ENCODE measurements at regions of chr10 and their contacts with region 1.

Region 1: GRCh38 chr10:124092860-124093773 is at the start of gene CHST15:
- DNase-seq: peak; percentile 69
- H3K4me3 ChIP-seq: peak within 1 kb of the TSS; percentile 81
- H3K27ac ChIP-seq: peak within 1 kb of the TSS; percentile 68
- H3K4me1 ChIP-seq: peaks cover 42% of the 10 kb centered on the region
- CTCF ChIP-seq: peak; percentile 63
- total RNA-seq, gene CHST15: 19.9 and 26.4 TPM in 2 replicates

Region 2: GRCh38 chr10:124035928-124036558 is 57.1 kb before region 1 on chr10:
- CTCF ChIA-PET with region 1: no interaction called
- POLR2A ChIA-PET with region 1: no interaction called
- intact Hi-C with region 1: loop called (anchors 2 kb)
- DNase-seq: peak; percentile 96
- H3K4me3 ChIP-seq: peak overlapping the region; percentile 57
- H3K27ac ChIP-seq: peak overlapping the region; percentile 90
- H3K4me1 ChIP-seq: peaks cover 35% of the 10 kb centered on the region
- CTCF ChIP-seq: no peak

Region 3: GRCh38 chr10:124049484-124049883 is 43.6 kb before region 1 on chr10:
- CTCF ChIA-PET with region 1: no interaction called
- POLR2A ChIA-PET with region 1: no interaction called
- intact Hi-C with region 1: no loop called
- DNase-seq: no peak
- H3K4me3 ChIP-seq: no peak overlapping the region
- H3K27ac ChIP-seq: no peak overlapping the region
- H3K4me1 ChIP-seq: peaks cover 21% of the 10 kb centered on the region
- CTCF ChIP-seq: no peak

Region 4: GRCh38 chr10:124074501-124075109 is 18.5 kb before region 1 on chr10:
- CTCF ChIA-PET with region 1: interaction called, 3 read pairs
- POLR2A ChIA-PET with region 1: interaction called, 14 read pairs
- intact Hi-C with region 1: loop called (anchors 2 kb)
- DNase-seq: peak; percentile 65
- H3K4me3 ChIP-seq: peak overlapping the region; percentile 25
- H3K27ac ChIP-seq: peak overlapping the region; percentile 88
- H3K4me1 ChIP-seq: peaks cover 98% of the 10 kb centered on the region
- CTCF ChIP-seq: no peak

Region 5: GRCh38 chr10:124145109-124145870 is 52.2 kb after region 1 on chr10:
- CTCF ChIA-PET with region 1: no interaction called
- POLR2A ChIA-PET with region 1: interaction called, 3 read pairs
- intact Hi-C with region 1: loop called (anchors 2 kb)
- DNase-seq: peak; percentile 87
- H3K4me3 ChIP-seq: peak overlapping the region; percentile 72
- H3K27ac ChIP-seq: peak overlapping the region; percentile 80
- H3K4me1 ChIP-seq: peaks cover 90% of the 10 kb centered on the region
- CTCF ChIP-seq: no peak

Region 6: DNA sequence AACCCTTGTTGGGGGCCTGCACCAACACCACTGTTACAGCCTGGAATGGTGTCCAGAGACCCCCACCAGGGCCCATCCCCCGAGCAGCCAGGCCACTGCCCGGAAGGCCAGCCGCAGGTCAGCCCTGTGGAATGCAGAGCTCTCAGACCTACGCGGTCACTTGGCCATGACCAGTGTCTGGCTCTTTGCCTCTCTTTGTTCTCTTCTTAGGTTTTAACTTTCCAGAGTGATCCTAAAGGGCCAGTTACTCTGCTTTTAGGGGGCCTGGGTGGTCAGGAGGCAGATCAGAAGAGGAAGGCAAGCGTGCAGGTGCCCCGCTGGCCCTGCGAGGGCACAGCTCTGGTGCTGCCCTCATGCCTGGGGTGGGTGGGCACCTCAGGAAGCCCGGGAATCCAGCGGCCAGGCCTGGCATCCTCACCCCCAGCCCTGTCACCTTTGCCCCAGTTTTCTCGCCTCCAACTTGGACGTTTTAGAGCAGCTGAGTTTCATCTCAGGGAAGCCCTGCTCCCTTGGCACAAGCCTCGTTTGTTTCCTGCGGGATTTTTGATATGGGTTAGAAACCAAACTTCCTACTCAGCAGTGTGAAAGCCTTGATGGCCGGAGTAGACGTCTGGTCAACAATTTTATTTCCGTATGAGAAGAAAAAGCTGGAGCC is 62.8 kb after region 1 on chr10:
- CTCF ChIA-PET with region 1: no interaction called
- POLR2A ChIA-PET with region 1: no interaction called
- intact Hi-C with region 1: no loop called
- DNase-seq: no peak
- H3K4me3 ChIP-seq: no peak overlapping the region
- H3K27ac ChIP-seq: no peak overlapping the region
- H3K4me1 ChIP-seq: peaks cover 45% of the 10 kb centered on the region
- CTCF ChIP-seq: no peak

Region 7: DNA sequence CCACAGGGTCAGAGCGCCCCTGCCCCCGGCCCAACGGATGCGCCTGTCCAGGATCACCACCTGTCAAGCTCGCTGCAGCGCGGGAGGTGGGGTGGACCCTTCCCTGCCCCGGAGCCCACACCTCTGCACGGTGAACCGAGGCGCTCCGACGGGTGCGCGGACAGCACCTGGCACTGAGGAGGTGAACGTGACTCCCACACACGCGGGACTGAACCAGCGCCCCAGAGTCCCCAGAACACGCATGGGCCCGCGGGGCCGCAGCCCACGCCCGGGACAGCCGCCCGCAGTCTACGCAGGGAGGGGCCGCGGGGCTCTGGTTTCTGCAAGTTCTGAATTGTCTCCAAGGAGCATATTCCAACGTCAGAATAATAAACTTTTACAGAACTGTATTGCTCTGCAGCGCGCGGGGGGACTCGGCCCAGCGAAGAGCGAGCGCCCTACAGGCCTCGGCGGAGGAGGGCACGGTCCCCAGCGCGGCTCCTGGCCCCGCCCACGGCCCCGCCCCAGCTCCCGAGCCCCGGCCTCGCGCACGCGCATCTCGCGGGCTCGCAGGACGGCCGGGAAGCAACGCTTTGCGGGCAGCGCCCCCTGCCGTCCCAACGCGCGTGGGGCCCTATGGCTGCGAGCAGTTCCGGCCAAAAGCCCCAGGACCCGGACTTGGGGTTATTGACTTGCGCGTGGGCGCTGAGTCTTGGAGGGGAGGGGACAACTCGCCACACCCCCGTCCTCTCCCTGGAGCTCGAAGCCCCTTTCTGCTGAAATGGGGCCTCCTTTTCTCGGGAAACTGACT is 295.9 kb after region 1 on chr10:
- CTCF ChIA-PET with region 1: no interaction called
- POLR2A ChIA-PET with region 1: no interaction called
- intact Hi-C with region 1: loop called (anchors 5 kb)
- DNase-seq: peak; percentile 90
- H3K4me3 ChIP-seq: peak overlapping the region; percentile 15
- H3K27ac ChIP-seq: no peak overlapping the region
- H3K4me1 ChIP-seq: peaks cover 5% of the 10 kb centered on the region
- CTCF ChIP-seq: peak; percentile 89

Region 8: DNA sequence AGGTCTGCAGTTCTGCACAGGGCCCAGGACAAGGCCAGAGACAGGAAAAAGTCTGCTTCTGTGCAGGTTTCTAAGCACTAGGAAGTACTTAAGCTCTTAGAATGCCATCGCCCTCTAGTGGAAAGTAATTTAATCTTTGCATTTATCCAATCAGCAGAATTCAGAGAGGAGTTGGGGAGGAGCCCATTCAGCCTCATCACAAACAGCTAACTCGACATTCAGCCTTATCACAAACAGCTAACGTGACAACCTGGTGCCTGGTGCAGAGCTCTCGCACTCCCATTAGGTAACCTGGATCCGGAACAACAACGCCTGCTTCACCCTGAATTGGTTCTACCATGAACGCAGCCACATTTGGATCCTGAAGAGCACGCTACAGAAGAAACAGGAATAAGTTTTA is 310.4 kb after region 1 on chr10:
- CTCF ChIA-PET with region 1: no interaction called
- POLR2A ChIA-PET with region 1: no interaction called
- intact Hi-C with region 1: loop called (anchors 5 kb)
- DNase-seq: peak; percentile 94
- H3K4me3 ChIP-seq: no peak overlapping the region
- H3K27ac ChIP-seq: peak overlapping the region; percentile 44
- H3K4me1 ChIP-seq: peaks cover 12% of the 10 kb centered on the region
- CTCF ChIP-seq: peak; percentile 86

Measured in OCI-LY7 (cell line).